B cell (primary cell): ENCODE measurements at regions of chr6 and their contacts with region 1.

Region 1: DNA sequence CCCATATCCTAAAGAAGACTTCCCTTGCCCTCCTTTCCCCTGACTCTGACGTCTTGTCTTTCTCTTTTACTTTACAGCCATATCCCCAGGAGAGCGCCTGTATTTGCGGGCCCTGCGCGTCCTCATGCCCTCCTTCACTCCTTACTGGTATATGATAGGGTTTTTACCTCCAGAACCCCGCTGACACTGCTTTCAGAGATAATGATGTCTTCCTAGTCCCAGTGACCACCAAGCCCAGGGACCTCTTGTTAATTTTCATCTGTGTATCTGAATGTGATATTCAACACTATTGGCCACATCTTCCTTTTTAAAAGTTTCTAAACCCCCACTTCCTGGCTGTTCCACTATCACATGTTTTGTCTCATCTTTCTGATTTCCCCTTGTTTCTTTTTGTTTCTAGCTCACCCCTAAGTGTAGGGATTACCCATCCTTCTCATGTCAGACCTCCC is 102.0 kb downstream of the HIVEP1 start:
- DNase-seq: peak; percentile 75
- ATAC-seq: peak; percentile 63
- H3K4me3 ChIP-seq: peak overlapping the region in 2 of 5 experiments; percentile 28 to 34
- H3K4me3 Mint-ChIP-seq: peak overlapping the region; percentile 72
- H3K27ac ChIP-seq: peak overlapping the region; percentile 67 to 79
- H3K27ac Mint-ChIP-seq: peak overlapping the region; percentile 81
- H3K4me1 ChIP-seq: peaks cover 28 to 55% of the 10 kb centered on the region in 2 donors
- H3K4me1 Mint-ChIP-seq: peaks cover 54% of the 10 kb centered on the region
- H3K27me3 ChIP-seq: no peaks in the 10 kb centered on the region
- H3K27me3 Mint-ChIP-seq: no peaks in the 10 kb centered on the region
- CTCF ChIP-seq: no peak

Region 2: GRCh38 chr6:12051861-12052368 is 62.2 kb before region 1 on chr6:
- CTCF ChIA-PET with region 1: interaction called, 3 read pairs
- POLR2A ChIA-PET with region 1: interaction called, 4 read pairs
- intact Hi-C with region 1: loop called (anchors 2 kb)
- DNase-seq: peak; percentile 88
- ATAC-seq: peak; percentile 85
- H3K4me3 ChIP-seq: peak overlapping the region in 2 of 5 experiments; percentile 38 to 58
- H3K4me3 Mint-ChIP-seq: peak overlapping the region; percentile 74
- H3K27ac ChIP-seq: peak overlapping the region; percentile 89 to 96
- H3K27ac Mint-ChIP-seq: peak overlapping the region; percentile 88
- H3K4me1 ChIP-seq: peaks cover 60 to 66% of the 10 kb centered on the region in 2 donors
- H3K4me1 Mint-ChIP-seq: peaks cover 74% of the 10 kb centered on the region
- H3K27me3 ChIP-seq: no peaks in the 10 kb centered on the region
- H3K27me3 Mint-ChIP-seq: no peaks in the 10 kb centered on the region
- CTCF ChIP-seq: peak; percentile 30

Region 3: DNA sequence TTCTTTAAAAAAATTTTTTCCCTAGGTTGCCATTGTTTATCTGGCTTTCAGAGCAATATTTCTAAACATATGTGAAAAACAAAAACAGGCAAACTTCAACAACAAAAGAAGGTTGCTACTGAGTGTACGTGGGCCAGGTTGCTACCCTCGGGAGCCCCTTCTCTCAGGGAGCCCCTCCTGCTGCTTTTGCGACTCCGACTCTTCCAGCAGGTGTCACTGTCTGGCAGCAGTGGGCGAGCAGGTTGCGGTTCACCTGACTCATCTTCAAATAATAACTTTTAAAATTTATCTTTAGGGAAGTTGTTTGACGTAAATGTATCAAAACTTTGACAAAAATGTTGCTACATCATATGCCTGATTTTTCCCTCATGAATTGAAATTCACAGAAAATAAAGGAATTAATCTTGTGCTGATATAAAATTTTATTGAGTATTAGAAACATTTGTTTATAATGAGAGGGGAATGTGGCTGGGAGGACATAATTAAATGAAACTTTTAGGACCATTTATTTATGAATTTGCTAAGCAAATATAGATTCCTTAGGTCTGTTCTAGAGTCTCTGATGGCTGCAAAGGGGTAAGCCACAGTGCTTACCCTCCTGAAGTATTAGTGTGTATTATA is 36.8 kb after region 1 on chr6:
- CTCF ChIA-PET with region 1: no interaction called
- POLR2A ChIA-PET with region 1: no interaction called
- intact Hi-C with region 1: no loop called
- DNase-seq: peak; percentile 20
- ATAC-seq: no peak
- H3K4me3 ChIP-seq: no peak overlapping the region
- H3K4me3 Mint-ChIP-seq: no peak overlapping the region
- H3K27ac ChIP-seq: no peak overlapping the region
- H3K27ac Mint-ChIP-seq: no peak overlapping the region
- H3K4me1 ChIP-seq: no peaks in the 10 kb centered on the region
- H3K4me1 Mint-ChIP-seq: peaks cover 12% of the 10 kb centered on the region
- H3K27me3 ChIP-seq: no peaks in the 10 kb centered on the region
- H3K27me3 Mint-ChIP-seq: no peaks in the 10 kb centered on the region
- CTCF ChIP-seq: peak; percentile 46